Activated CD4-positive, alpha-beta T cell treated with anti-CD3 and anti-CD28 coated beads, Interleukin-2, amount 10 ng/mL, durations not matched to agents 24 days and 14 days (primary cell): ENCODE measurements at regions of chr1 and their contacts with region 1.

Region 1: DNA sequence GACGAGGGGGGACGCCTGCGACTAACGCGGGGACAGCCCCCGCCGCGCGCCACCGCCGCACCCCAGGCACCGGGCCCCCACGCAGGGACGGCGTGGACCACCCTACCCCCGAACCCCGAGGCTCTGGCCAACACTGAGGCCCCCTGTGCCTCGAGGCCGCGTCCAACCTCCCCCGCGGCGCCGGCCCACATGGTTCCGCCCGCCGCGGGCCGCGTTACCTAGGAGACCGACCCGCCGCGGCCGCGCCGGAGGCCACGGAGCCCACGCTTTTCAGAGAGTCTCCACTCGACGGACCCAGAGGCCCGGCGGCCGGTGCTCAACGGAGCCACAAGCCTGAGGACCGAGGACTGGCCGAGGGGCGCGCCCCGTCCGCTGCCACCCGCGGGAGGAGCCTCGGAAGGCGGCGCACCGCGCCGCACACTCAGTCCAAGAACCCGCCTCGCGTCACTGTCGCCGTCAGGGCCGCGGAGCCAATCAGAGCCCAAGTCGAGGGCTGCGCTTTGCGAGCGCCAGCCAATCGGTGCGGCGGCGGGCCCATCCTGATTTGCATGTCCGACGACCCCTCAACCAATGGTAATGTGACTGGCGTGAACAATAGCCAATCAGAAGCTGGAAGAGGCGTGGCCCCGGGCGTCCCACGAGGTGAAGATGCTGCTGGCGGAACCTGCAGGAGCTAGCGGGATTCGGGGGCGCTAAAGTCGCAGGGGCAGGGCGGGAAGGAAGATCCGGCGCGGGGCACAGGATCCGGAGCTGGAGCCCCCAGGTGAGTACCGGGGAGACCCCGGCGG is at the start of gene NPHP4:
- DNase-seq: peak; percentile 100
- H3K4me3 Mint-ChIP-seq: peak within 1 kb of the TSS; percentile 99
- H3K27ac Mint-ChIP-seq: peak within 1 kb of the TSS; percentile 97
- H3K4me1 Mint-ChIP-seq: peaks cover 26% of the 10 kb centered on the region
- H3K27me3 Mint-ChIP-seq: no peaks in the 10 kb centered on the region
- total RNA-seq, gene NPHP4: 20.0 and 21.0 TPM in 2 replicates

Region 2: DNA sequence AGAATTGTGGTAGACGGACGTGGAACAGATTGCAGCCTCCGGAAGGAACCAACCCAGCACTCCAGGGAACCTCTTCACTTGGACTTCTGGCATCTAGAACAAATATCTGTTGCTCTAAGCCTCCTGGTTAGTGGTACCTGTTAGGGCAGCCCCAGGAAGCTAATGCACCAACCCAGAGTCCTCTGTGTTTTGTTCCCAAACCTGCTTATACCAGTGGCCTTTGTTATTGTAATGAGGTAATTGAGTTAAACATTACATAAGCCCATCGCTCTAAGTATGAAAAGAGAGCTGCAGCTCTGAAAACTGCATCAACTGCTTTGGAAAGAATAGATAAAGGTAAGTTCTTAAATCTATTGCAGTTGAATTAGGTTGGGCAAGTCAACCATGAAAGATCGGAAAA is 516.6 kb before region 1 on chr1:
- intact Hi-C with region 1: no loop called
- DNase-seq: no peak
- H3K4me3 Mint-ChIP-seq: no peak overlapping the region
- H3K27ac Mint-ChIP-seq: no peak overlapping the region
- H3K4me1 Mint-ChIP-seq: no peaks in the 10 kb centered on the region
- H3K27me3 Mint-ChIP-seq: no peaks in the 10 kb centered on the region

Region 3: GRCh38 chr1:5667513-5668325 is 324.5 kb before region 1 on chr1:
- intact Hi-C with region 1: no loop called
- DNase-seq: no peak
- H3K4me3 Mint-ChIP-seq: peak overlapping the region; percentile 43
- H3K27ac Mint-ChIP-seq: no peak overlapping the region
- H3K4me1 Mint-ChIP-seq: no peaks in the 10 kb centered on the region
- H3K27me3 Mint-ChIP-seq: no peaks in the 10 kb centered on the region

Region 4: DNA sequence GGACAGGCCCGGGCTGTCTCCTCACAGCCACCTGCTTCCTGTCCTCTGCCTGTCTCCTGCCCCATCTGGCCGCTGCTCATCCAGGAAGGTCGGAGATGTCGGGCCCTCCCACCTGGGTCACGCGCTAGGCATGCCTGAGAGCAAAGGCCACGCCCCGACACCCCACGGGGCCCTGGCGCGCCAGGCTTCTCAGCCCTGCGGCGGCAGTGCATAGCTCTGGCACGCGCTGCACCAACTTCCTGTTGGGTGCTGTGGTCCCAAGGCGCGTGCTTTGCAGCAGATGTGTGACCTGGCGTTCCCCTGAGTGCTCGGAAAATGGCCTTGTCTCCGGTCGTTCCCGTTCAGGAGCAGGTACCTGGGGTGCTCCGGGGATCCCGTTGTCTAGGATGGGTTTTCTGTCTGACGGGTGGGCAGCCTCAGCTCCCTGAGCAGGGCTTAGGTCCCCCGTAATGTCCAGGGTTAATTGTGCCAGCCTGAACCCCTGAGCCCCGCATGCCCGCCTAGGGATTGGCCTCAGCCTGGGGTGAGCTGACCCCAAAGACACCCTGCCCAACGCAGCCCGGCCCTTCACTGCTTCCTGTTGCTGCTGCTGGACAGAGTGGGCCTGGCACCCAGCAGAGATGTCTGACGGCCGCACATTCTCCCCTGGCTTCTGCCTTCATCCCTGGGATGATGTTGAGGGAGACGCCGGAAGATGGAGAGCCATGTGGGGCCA is 34.0 kb after region 1 on chr1:
- intact Hi-C with region 1: loop called (anchors 1 kb)
- DNase-seq: peak; percentile 98
- H3K4me3 Mint-ChIP-seq: peak overlapping the region; percentile 94
- H3K27ac Mint-ChIP-seq: peak overlapping the region; percentile 95
- H3K4me1 Mint-ChIP-seq: peaks cover 43% of the 10 kb centered on the region
- H3K27me3 Mint-ChIP-seq: no peaks in the 10 kb centered on the region

Region 5: DNA sequence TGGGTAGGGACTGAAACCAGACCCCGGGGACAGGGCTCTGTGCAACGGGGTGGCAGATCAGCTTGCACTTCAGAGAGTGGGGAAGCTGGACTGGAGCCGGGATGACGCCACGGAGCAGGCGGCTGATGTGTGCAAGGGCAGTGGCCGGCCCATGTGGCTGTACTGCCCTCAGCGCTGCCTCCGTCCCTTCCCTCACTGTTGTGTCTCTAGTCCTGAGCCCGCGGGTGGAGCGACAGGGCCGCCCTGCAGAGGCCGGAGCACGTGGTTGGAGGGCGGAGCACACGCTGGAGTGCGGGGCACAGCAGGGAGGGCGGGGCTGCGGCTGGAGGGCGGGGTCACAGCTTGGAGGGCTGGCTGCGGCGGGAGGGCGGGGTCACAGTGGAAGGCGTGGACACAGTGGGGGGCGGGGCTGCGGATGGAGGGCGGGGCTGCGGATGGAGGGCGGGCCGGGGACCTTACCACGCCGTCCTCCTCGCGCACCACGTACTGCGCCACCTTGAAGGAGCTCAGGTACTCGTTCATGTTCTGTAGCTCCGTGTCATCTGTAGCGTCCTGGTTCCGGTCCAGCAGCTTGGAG is 135.5 kb after region 1 on chr1:
- intact Hi-C with region 1: no loop called
- DNase-seq: peak; percentile 90
- H3K4me3 Mint-ChIP-seq: no peak overlapping the region
- H3K27ac Mint-ChIP-seq: no peak overlapping the region
- H3K4me1 Mint-ChIP-seq: no peaks in the 10 kb centered on the region
- H3K27me3 Mint-ChIP-seq: no peaks in the 10 kb centered on the region

Region 6: GRCh38 chr1:6199298-6200187 is 207.3 kb after region 1 on chr1 and contains the start of gene RPL22:
- intact Hi-C with region 1: loop called (anchors 5 kb)
- DNase-seq: peak; percentile 99
- H3K4me3 Mint-ChIP-seq: peak within 1 kb of the TSS; percentile 88
- H3K27ac Mint-ChIP-seq: peak within 1 kb of the TSS; percentile 85
- H3K4me1 Mint-ChIP-seq: peaks cover 37% of the 10 kb centered on the region
- H3K27me3 Mint-ChIP-seq: no peaks in the 10 kb centered on the region
- total RNA-seq, gene RPL22: 437 and 463 TPM in 2 replicates

Region 7: GRCh38 chr1:6330410-6330911 is 338.2 kb after region 1 on chr1:
- intact Hi-C with region 1: no loop called
- DNase-seq: no peak
- H3K4me3 Mint-ChIP-seq: no peak overlapping the region
- H3K27ac Mint-ChIP-seq: no peak overlapping the region
- H3K4me1 Mint-ChIP-seq: no peaks in the 10 kb centered on the region
- H3K27me3 Mint-ChIP-seq: no peaks in the 10 kb centered on the region